CD4-positive, alpha-beta memory T cell (primary cell): ENCODE measurements at regions of chr12 and their contacts with region 1.

Region 1: DNA sequence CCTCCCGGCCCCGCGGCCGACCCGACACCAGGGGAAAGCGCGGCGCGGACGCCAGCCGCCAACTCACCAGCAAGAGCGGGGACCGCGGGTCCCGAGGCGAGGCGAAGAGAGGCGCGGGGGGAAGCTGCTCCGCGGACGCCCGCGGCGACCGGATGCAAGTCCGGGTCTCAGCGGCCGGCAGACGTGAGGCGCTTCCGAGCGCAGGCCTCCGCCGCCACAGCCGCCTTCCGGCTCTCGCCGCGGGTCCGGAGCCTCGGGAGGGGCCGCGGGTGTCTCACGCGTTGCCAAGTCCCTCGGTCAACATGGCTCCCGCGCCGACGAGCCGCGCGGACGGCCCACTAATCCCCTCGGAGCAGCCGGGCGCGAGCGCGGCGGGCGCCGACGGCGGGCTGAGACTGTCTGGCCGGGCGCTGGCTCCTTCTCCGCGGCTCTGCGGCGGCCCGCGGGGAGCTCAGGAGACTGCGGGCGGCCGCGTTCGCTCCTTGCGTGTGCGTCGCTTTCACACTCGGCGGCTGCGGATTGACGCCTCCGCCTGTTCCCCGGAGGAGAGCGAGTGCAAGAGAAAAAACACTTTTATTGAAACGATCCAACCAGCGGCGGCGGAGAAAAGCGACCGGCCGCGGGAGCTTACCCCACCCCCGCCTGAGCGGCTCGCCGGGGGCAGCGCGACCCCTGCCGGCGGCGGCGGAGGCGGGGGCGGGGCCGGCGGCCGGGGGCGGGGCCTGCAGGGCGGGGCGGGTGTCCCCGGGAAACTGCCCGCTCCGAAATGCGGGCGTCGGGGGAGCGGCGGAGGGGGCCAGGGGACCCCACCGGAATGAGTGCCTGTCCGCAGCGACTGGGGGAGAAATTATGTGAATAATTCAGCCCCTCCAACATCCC is at the start of gene CDK17:
- DNase-seq: peak; percentile 90 to 92 (median 90)
- H3K4me3 ChIP-seq: peak within 1 kb of the TSS; percentile 86 to 87
- H3K4me3 Mint-ChIP-seq: peak within 1 kb of the TSS; percentile 96 to 99 (median 98)
- H3K27ac ChIP-seq: peak within 1 kb of the TSS; percentile 96
- H3K27ac Mint-ChIP-seq: peak within 1 kb of the TSS; percentile 96 to 99 (median 98)
- H3K4me1 ChIP-seq: peaks cover 45% of the 10 kb centered on the region
- H3K4me1 Mint-ChIP-seq: peaks cover 30 to 55% (median 40%) of the 10 kb centered on the region in 4 donors
- H3K27me3 ChIP-seq: no peaks in the 10 kb centered on the region
- H3K27me3 Mint-ChIP-seq: no peaks in the 10 kb centered on the region
- total RNA-seq, gene CDK17: 66.9 to 67.4 TPM

Region 2: DNA sequence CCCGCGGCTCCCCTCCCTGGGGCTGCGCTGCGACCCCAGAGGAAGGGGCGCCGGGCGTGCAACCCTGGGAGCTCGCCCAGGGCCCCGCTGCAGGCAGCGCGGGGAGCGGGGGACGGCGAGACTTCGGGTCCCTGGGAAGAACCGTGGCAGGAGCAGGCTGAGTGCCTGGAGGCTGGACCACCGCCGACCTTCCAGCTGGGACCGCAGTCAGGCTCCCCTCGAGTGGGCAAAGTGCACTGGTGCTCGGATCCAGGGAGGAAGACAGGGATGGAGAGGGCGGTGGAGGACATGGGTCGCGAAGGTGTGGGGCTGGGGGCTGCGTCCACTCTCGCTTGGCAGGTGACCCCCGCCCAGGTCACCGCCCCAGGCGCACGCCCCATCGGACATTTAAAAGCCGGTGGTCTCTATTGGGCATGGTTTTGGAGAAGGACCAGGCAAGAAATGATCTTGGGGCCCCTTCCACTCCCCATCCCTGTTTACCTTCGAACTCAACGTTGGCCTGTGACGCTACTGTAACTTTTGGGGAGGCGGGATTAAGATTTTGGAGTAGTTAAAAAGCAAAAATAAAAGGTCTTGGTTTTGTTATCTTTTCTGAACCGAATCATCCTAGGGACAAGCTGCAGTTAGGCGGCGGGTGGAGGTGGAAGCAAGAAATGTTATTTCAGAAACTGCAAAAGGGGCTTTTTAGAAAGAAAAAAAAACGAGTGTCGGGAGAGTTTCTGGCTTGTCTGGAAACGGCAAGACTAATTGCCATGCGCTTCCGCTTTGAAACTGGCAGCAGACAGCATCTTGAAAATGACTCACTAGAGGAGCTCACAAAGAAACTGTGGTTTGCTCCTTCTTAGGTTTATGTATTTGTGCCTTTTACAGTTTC is 204.9 kb before region 1 on chr12:
- CTCF ChIA-PET with region 1: interaction called, 3 read pairs
- POLR2A ChIA-PET with region 1: interaction called, 15 read pairs
- intact Hi-C with region 1: loop called (anchors 1 kb)
- DNase-seq: peak; percentile 72 to 94 (median 76)
- H3K4me3 ChIP-seq: peak overlapping the region; percentile 85 to 90
- H3K4me3 Mint-ChIP-seq: peak overlapping the region; percentile 93 to 100 (median 98)
- H3K27ac ChIP-seq: peak overlapping the region; percentile 95
- H3K27ac Mint-ChIP-seq: peak overlapping the region; percentile 96 to 100 (median 97)
- H3K4me1 ChIP-seq: peaks cover 52% of the 10 kb centered on the region
- H3K4me1 Mint-ChIP-seq: peaks cover 34 to 62% (median 42%) of the 10 kb centered on the region in 4 donors
- H3K27me3 ChIP-seq: no peaks in the 10 kb centered on the region
- H3K27me3 Mint-ChIP-seq: no peaks in the 10 kb centered on the region

Region 3: GRCh38 chr12:96266238-96266637 is 133.9 kb before region 1 on chr12:
- CTCF ChIA-PET with region 1: interaction called, 5 read pairs
- POLR2A ChIA-PET with region 1: interaction called, 15 read pairs
- intact Hi-C with region 1: no loop called
- DNase-seq: no peak
- H3K4me3 ChIP-seq: no peak overlapping the region
- H3K4me3 Mint-ChIP-seq: no peak overlapping the region
- H3K27ac ChIP-seq: no peak overlapping the region
- H3K27ac Mint-ChIP-seq: peak overlapping the region in 3 of 7 donors; percentile 50 to 82 (median 64)
- H3K4me1 ChIP-seq: no peaks in the 10 kb centered on the region
- H3K4me1 Mint-ChIP-seq: peaks cover 22 to 50% (median 25%) of the 10 kb centered on the region in 4 donors
- H3K27me3 ChIP-seq: no peaks in the 10 kb centered on the region
- H3K27me3 Mint-ChIP-seq: no peaks in the 10 kb centered on the region

Region 4: GRCh38 chr12:96314723-96315122 is 85.4 kb before region 1 on chr12:
- CTCF ChIA-PET with region 1: interaction called, 3 read pairs
- POLR2A ChIA-PET with region 1: interaction called, 19 read pairs
- intact Hi-C with region 1: no loop called
- DNase-seq: no peak
- H3K4me3 ChIP-seq: no peak overlapping the region
- H3K4me3 Mint-ChIP-seq: peak overlapping the region in 3 of 8 donors; percentile 29 to 57 (median 31)
- H3K27ac ChIP-seq: no peak overlapping the region
- H3K27ac Mint-ChIP-seq: peak overlapping the region in 6 of 7 donors; percentile 24 to 85 (median 46)
- H3K4me1 ChIP-seq: peaks cover 25% of the 10 kb centered on the region
- H3K4me1 Mint-ChIP-seq: peaks cover 7 to 22% (median 14%) of the 10 kb centered on the region in 4 donors
- H3K27me3 ChIP-seq: no peaks in the 10 kb centered on the region
- H3K27me3 Mint-ChIP-seq: no peaks in the 10 kb centered on the region

Region 5: DNA sequence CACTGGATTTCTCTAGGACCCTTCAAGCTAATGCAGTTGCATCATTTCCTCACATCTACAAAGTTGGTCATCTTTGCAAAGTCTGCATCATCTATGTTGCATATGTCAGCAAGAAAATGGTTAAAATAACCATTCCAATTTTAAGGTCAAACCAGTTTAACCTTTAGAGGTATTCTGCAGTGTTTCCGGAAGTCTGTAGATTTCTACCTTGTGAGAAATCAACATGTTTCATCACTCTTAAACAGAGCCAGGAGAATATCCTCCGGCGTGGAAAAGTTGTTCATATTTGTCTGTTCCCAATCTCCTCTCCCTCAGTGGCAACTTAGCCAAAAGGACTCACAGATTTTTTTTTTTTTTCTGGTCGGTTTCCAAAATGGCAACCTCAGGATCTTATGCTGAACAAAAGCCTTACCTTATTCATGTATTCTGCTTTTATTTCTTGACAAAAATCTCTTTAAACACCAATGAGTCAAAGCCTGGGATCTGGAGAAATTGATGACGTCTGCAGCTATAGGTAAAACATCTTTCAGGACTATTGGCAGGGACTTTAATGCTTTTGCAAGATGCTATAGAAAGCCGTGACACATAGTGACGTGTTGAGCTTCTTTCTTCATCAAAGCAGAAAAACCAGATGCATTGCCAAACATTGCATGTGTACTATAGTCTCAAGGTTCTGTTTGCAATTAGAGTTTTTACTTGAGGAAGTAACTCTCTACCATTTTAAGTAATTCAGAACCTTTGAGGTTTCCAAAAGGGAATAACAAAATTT is 16.1 kb after region 1 on chr12:
- CTCF ChIA-PET with region 1: interaction called, 12 read pairs
- POLR2A ChIA-PET with region 1: interaction called, 9 read pairs
- intact Hi-C with region 1: no loop called
- DNase-seq: no peak
- H3K4me3 ChIP-seq: no peak overlapping the region
- H3K4me3 Mint-ChIP-seq: no peak overlapping the region
- H3K27ac ChIP-seq: no peak overlapping the region
- H3K27ac Mint-ChIP-seq: peak overlapping the region in 1 of 7 donors; percentile 48
- H3K4me1 ChIP-seq: peaks cover 17% of the 10 kb centered on the region
- H3K4me1 Mint-ChIP-seq: peaks cover 7 to 31% (median 13%) of the 10 kb centered on the region in 4 donors
- H3K27me3 ChIP-seq: no peaks in the 10 kb centered on the region
- H3K27me3 Mint-ChIP-seq: no peaks in the 10 kb centered on the region

Region 6: GRCh38 chr12:96473394-96474093 is 73.4 kb after region 1 on chr12:
- CTCF ChIA-PET with region 1: no interaction called
- POLR2A ChIA-PET with region 1: no interaction called
- intact Hi-C with region 1: no loop called
- DNase-seq: no peak
- H3K4me3 ChIP-seq: no peak overlapping the region
- H3K4me3 Mint-ChIP-seq: no peak overlapping the region
- H3K27ac ChIP-seq: no peak overlapping the region
- H3K27ac Mint-ChIP-seq: peak overlapping the region in 1 of 7 donors; percentile 85
- H3K4me1 ChIP-seq: no peaks in the 10 kb centered on the region
- H3K4me1 Mint-ChIP-seq: peaks cover 0 to 4% (median under 1%) of the 10 kb centered on the region in 4 donors
- H3K27me3 ChIP-seq: no peaks in the 10 kb centered on the region
- H3K27me3 Mint-ChIP-seq: peaks cover 0 to 2% of the 10 kb centered on the region in 2 donors

Region 7: GRCh38 chr12:96501139-96501761 is 101.1 kb after region 1 on chr12:
- CTCF ChIA-PET with region 1: interaction called, 14 read pairs
- POLR2A ChIA-PET with region 1: interaction called, 41 read pairs
- intact Hi-C with region 1: loop called (anchors 5 kb)
- DNase-seq: peak in 4 of 5 donors; percentile 29 to 65 (median 37)
- H3K4me3 ChIP-seq: peak overlapping the region in 1 of 2 donors; percentile 17
- H3K4me3 Mint-ChIP-seq: peak overlapping the region in 7 of 8 donors; percentile 35 to 74 (median 53)
- H3K27ac ChIP-seq: peak overlapping the region; percentile 18
- H3K27ac Mint-ChIP-seq: peak overlapping the region; percentile 79 to 98 (median 89)
- H3K4me1 ChIP-seq: peaks cover 46% of the 10 kb centered on the region
- H3K4me1 Mint-ChIP-seq: peaks cover 44 to 63% (median 54%) of the 10 kb centered on the region in 4 donors
- H3K27me3 ChIP-seq: no peaks in the 10 kb centered on the region
- H3K27me3 Mint-ChIP-seq: no peaks in the 10 kb centered on the region

Region 8: DNA sequence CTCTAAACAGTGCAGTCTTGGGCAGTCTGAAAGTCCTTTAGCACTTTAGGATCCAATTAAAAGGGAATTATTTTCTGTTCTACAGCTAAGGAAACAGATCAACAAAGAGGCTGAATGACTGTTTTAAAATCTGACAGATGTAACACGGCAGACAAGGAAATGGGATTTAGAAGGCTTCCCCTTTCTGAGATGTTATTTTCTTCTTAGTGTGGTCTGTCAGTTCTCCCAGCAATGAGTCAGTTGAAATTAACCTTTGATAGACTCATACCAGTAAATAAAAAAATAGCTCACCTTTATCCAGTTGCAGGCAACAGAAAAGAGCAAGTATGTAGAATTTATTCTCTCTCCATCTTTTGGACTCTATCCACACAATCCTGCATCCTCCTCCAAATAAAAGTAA is 605.0 kb after region 1 on chr12:
- CTCF ChIA-PET with region 1: no interaction called
- POLR2A ChIA-PET with region 1: no interaction called
- intact Hi-C with region 1: no loop called
- DNase-seq: no peak
- H3K4me3 ChIP-seq: no peak overlapping the region
- H3K4me3 Mint-ChIP-seq: no peak overlapping the region
- H3K27ac ChIP-seq: no peak overlapping the region
- H3K27ac Mint-ChIP-seq: no peak overlapping the region
- H3K4me1 ChIP-seq: no peaks in the 10 kb centered on the region
- H3K4me1 Mint-ChIP-seq: no peaks in the 10 kb centered on the region
- H3K27me3 ChIP-seq: no peaks in the 10 kb centered on the region
- H3K27me3 Mint-ChIP-seq: peaks cover 6 to 14% of the 10 kb centered on the region in 2 donors